ENCODE measurements at regions of chr6 and their contacts with region 1.

Region 1: GRCh38 chr6:89311853-89312531 is 3.1 kb downstream of the GABRR2 start:
- DNase-seq: peak; percentile 95
- H3K4me3 ChIP-seq: no peak overlapping the region
- H3K27ac ChIP-seq: peak overlapping the region; percentile 67
- H3K4me1 ChIP-seq: peaks cover 22% of the 10 kb centered on the region
- H3K27me3 ChIP-seq: no peaks in the 10 kb centered on the region
- CTCF ChIP-seq: peak; percentile 51 to 81
- POLR2A ChIP-seq: no peak

Region 2: DNA sequence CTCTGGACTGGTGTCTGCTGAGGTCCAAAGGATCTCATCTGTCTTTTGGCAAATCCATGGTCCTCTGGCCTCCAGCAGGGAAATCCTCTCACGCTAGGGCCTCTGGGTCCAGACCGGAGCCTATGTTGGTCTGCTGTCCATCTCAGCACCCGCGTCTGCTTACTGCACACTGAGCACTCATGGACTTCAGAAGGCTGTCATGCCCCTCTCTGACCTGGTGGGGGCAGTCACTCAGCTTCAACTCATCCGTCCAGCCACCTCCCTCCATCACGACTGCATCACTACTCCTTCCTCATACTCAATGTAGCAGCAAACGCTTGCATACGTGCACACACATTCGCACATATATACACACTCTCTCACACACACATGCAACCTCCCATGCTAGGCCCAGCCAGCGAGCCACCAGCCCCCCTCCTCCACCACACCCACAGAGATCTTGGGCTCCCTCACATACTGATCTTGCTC is 30.2 kb before region 1 on chr6:
- CTCF ChIA-PET with region 1: interaction called, 6 read pairs
- POLR2A ChIA-PET with region 1: no interaction called
- dilution Hi-C with region 1: no loop called
- intact Hi-C with region 1: loop called (anchors 1 kb)
- DNase-seq: peak; percentile 47
- H3K4me3 ChIP-seq: no peak overlapping the region
- H3K27ac ChIP-seq: no peak overlapping the region
- H3K4me1 ChIP-seq: no peaks in the 10 kb centered on the region
- H3K27me3 ChIP-seq: peaks cover 0 to 2% of the 10 kb centered on the region in 2 experiments
- CTCF ChIP-seq: peak; percentile 67 to 69
- POLR2A ChIP-seq: no peak

Region 3: DNA sequence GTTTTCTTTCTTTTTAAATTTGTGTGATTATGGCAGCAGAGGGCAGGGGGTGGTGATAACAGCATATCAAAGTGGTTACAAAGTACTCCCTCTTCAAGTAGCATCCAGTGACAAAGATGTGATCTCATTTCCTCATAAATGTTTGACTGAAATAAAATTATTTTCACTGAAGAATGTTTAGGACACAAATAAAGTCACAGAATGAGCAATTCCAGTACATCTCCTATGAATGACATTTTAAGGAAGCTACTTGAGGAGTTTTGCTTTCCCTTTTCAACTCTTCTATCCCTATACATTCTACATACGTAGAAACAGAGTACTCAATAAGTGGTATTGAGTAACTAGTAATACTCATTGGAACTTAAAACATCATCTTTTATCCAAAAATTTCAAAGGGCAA is 17.0 kb after region 1 on chr6:
- CTCF ChIA-PET with region 1: interaction called, 15 read pairs
- POLR2A ChIA-PET with region 1: no interaction called
- dilution Hi-C with region 1: no loop called
- intact Hi-C with region 1: no loop called
- DNase-seq: no peak
- H3K4me3 ChIP-seq: no peak overlapping the region
- H3K27ac ChIP-seq: no peak overlapping the region
- H3K4me1 ChIP-seq: peaks cover 10% of the 10 kb centered on the region
- H3K27me3 ChIP-seq: no peaks in the 10 kb centered on the region
- CTCF ChIP-seq: no peak
- POLR2A ChIP-seq: no peak

Region 4: GRCh38 chr6:89360415-89360999 is 48.5 kb after region 1 on chr6:
- CTCF ChIA-PET with region 1: interaction called, 102 read pairs
- POLR2A ChIA-PET with region 1: no interaction called
- dilution Hi-C with region 1: no loop called
- intact Hi-C with region 1: no loop called
- DNase-seq: no peak
- H3K4me3 ChIP-seq: no peak overlapping the region
- H3K27ac ChIP-seq: no peak overlapping the region
- H3K4me1 ChIP-seq: peaks cover 7% of the 10 kb centered on the region
- H3K27me3 ChIP-seq: no peaks in the 10 kb centered on the region
- CTCF ChIP-seq: no peak
- POLR2A ChIP-seq: no peak

Region 5: GRCh38 chr6:89610149-89610642 is 298.2 kb after region 1 on chr6:
- CTCF ChIA-PET with region 1: interaction called, 37 read pairs
- POLR2A ChIA-PET with region 1: no interaction called
- dilution Hi-C with region 1: no loop called
- intact Hi-C with region 1: loop called (anchors 1 kb)
- DNase-seq: peak; percentile 54
- H3K4me3 ChIP-seq: no peak overlapping the region
- H3K27ac ChIP-seq: no peak overlapping the region
- H3K4me1 ChIP-seq: peaks cover 6% of the 10 kb centered on the region
- H3K27me3 ChIP-seq: no peaks in the 10 kb centered on the region
- CTCF ChIP-seq: peak; percentile 77 to 82
- POLR2A ChIP-seq: no peak